Gastrocnemius medialis (tissue), 4 donors: ENCODE measurements at regions of chr6 and their contacts with region 1.

Region 1: GRCh38 chr6:24581084-24581669 is 64.8 kb downstream of the KIAA0319 start:
- DNase-seq: peak; percentile 8 to 42
- ATAC-seq: peak; percentile 73 to 84
- H3K4me3 ChIP-seq: no peak overlapping the region
- H3K27ac ChIP-seq: no peak overlapping the region
- H3K4me1 ChIP-seq: peaks cover 0 to 4% of the 10 kb centered on the region in 2 donors
- H3K27me3 ChIP-seq: no peaks in the 10 kb centered on the region
- CTCF ChIP-seq: peak; percentile 35 to 73 (median 67)
- POLR2A ChIP-seq: no peak

Region 2: DNA sequence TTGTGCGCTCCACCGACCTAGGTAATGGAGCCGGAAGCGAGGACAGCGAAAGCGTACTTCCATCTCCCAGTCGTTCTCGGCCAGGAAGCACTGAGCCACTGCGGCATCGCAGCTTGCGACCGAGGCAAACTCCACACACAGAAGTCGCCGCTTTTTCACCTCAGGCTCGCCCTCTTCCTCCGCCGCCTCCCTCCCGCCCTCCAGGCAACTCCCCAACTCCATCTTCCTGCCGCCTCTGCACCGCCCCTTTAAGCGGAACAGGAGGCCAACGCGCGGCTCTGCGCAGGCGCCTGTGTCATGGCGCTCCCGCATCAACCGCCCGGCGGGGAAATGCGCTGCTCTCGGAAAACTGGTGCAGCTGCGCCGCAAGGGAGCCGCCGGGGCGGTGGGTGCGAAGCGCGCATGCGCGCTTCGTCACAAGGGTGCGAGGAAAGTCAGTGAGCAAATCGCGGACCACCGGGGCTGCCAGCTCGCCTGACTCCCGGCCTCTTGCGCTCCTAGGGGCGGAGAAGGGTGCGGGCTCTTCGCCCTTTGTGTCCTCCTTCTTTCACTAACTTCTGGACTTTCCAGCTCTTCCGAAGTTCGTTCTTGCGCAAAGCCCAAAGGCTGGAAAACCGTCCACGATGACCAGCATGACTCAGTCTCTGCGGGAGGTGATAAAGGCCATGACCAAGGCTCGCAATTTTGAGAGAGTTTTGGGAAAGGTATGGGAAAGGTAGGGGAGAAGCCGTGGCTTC is 85.6 kb after region 1 on chr6 and contains the starts of genes ACOT13 and TDP2:
- in situ Hi-C with region 1: no loop called
- intact Hi-C with region 1: loop called (anchors 1 kb)
- DNase-seq: peak; percentile 89 to 95
- ATAC-seq: peak; percentile 91 to 94
- H3K4me3 ChIP-seq: peak within 1 kb of the TSS; percentile 76 to 95 (median 94)
- H3K27ac ChIP-seq: peak within 1 kb of the TSS; percentile 90 to 95 (median 92)
- H3K4me1 ChIP-seq: peaks cover 31 to 32% of the 10 kb centered on the region in 2 donors
- H3K27me3 ChIP-seq: no peaks in the 10 kb centered on the region
- CTCF ChIP-seq: peak; percentile 57 to 73 (median 61)
- POLR2A ChIP-seq: peak; percentile 73 to 81
- total RNA-seq, gene ACOT13: 13.6 to 28.2 (median 21.1) TPM
- total RNA-seq, gene TDP2: 17.6 to 44.2 (median 21.7) TPM

Region 3: DNA sequence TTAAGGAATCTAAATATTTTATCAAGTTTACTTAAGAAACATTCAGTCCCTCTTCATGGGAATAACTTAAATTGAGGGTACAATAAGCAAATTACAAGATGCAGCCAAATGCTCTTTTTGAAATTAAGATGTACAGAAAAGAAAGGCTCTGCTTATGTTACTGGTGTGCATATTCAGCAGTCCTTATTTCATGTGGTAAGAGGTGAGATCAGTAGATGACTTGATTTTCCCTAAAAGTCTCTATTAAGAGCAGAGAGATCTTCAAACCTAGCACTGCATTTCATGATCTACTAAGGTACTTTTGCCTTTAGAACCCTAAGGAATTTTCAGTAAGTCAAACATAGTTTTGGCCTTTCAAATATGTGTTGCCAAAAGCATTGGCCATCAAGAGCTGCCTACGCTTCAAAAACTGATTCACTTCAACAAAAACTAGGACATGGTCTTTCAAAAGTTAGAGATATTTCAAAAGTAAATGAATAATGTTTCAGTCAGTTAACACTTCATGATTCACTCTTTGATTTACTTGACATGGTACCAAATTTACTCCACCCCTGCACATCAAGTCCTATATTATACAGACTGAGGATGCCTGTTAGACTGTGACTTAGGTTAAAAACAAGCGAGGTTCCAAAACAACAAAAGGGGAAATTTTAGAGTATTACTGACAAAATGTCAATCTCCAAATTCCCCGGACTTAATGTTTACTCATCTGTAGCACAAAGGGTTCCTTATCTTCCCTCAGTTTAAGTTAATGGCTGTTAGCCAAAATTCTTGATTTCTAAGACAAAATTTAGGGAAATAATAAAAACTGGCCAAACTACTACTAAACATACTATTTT is 118.6 kb after region 1 on chr6:
- in situ Hi-C with region 1: loop called (anchors 5 to 10 kb)
- intact Hi-C with region 1: loop called (anchors 1 kb)
- DNase-seq: no peak
- ATAC-seq: no peak
- H3K4me3 ChIP-seq: no peak overlapping the region
- H3K27ac ChIP-seq: peak overlapping the region in 1 of 4 donors; percentile 17
- H3K4me1 ChIP-seq: no peaks in the 10 kb centered on the region
- H3K27me3 ChIP-seq: no peaks in the 10 kb centered on the region
- CTCF ChIP-seq: no peak
- POLR2A ChIP-seq: no peak

Region 4: GRCh38 chr6:24774696-24775519 is 193.7 kb after region 1 on chr6 and contains the start of gene GMNN:
- in situ Hi-C with region 1: no loop called
- intact Hi-C with region 1: loop called (anchors 5 kb)
- DNase-seq: peak; percentile 94 to 95
- ATAC-seq: peak; percentile 96 to 98
- H3K4me3 ChIP-seq: peak within 1 kb of the TSS; percentile 90 to 100 (median 95)
- H3K27ac ChIP-seq: peak within 1 kb of the TSS; percentile 95 to 100 (median 98)
- H3K4me1 ChIP-seq: peaks cover 11 to 15% of the 10 kb centered on the region in 2 donors
- H3K27me3 ChIP-seq: no peaks in the 10 kb centered on the region
- CTCF ChIP-seq: no peak
- POLR2A ChIP-seq: peak; percentile 59 to 62
- total RNA-seq, gene GMNN: 2.6 to 4.4 (median 3.3) TPM

Region 5: DNA sequence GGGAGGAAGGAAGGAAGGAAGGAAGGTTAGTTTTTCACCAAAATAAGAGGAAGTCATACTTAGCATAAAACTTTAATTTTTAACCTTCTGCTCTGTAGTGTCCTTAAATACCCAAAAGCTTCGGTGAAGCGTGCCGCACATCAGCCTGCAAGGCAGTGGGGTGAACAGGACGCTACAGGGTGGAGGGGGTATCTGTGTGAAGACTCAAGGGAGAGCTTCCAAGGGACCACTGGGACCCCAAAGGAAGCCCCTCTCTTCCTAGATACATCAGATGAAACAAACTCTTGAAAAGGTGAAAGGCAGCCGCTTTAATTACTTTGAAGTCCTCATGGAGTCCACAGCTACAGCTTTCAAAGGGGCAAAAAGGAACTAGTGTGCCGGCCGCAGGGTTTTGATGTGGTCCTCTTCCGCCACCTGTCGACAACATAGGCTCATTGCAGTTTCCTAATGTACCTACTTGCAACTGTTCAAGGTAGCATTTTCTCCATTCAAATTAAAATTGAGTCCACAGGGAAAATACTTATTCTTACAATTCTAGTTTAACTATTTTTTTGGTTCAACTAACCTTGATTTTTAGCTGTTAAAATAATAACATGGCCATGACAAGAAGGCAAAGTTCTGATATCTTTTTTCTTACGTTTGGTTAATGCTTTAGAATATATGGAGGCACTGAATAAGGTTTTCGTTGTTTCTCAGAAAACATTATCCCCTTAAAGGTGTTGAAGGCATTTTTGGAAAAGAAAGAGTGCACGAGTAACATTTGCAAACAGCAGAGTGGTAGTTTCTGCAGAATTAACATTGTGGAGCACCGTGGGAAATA is 489.6 kb after region 1 on chr6:
- in situ Hi-C with region 1: loop called in 2 of 4 experiments (anchors 10 to 25 kb)
- intact Hi-C with region 1: loop called (anchors 5 kb)
- DNase-seq: peak; percentile 42 to 54
- ATAC-seq: peak; percentile 80 to 86
- H3K4me3 ChIP-seq: peak overlapping the region in 1 of 4 donors; percentile 25
- H3K27ac ChIP-seq: no peak overlapping the region
- H3K4me1 ChIP-seq: no peaks in the 10 kb centered on the region
- H3K27me3 ChIP-seq: no peaks in the 10 kb centered on the region
- CTCF ChIP-seq: peak; percentile 62 to 92 (median 77)
- POLR2A ChIP-seq: no peak